ENCODE measurements at regions of chr3 and their contacts with region 1.

Region 1: GRCh38 chr3:81910244-81910852 is 148.9 kb upstream of the GBE1 start:
- DNase-seq: no peak
- H3K4me3 ChIP-seq: no peak overlapping the region
- CTCF ChIP-seq: peak; percentile 66

Region 2: GRCh38 chr3:81891055-81891895 is 19.1 kb before region 1 on chr3:
- CTCF ChIA-PET with region 1: interaction called, 21 read pairs
- POLR2A ChIA-PET with region 1: no interaction called
- DNase-seq: no peak
- H3K4me3 ChIP-seq: no peak overlapping the region
- CTCF ChIP-seq: no peak

Region 3: DNA sequence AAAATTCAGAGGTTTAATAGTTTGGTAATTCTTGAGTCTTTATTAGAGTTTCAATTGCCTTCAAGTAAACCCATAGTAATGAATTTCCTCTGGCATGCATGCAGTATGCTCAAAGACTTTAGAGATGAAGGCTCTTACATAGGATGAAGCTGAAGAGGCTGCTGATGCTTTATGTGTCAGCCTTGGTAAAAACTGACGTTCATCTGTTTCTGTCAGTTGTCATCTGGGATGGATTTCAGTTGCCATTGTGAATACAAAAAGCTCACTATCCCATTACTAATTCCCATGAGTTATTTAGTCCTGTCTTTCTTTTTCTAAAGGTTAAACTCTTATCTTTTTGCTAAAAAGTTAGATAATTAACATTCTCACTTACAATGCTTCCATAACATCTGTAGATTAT is 12.0 kb before region 1 on chr3:
- CTCF ChIA-PET with region 1: interaction called, 14 read pairs
- POLR2A ChIA-PET with region 1: no interaction called
- DNase-seq: no peak
- H3K4me3 ChIP-seq: no peak overlapping the region
- CTCF ChIP-seq: no peak

Region 4: DNA sequence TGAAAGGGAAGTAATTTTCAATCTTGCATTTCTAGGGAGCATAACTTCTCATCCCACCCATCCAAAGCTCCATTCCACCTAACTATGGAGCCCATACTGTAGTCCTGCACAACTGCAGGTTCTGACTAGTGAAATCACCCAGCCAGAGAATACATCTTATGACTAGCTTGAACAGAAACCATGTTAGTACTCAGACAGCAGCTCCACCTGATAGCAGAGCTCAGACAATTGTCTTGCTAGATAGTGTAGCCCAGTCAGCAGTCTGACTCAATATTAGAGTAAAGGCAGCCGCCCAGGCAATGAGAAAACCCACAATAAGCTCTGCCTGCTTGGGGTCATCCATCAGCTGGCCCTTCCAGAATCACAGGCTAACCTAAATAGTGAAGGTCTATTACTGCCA is 395.8 kb after region 1 on chr3:
- CTCF ChIA-PET with region 1: no interaction called
- POLR2A ChIA-PET with region 1: no interaction called
- DNase-seq: no peak
- H3K4me3 ChIP-seq: no peak overlapping the region
- CTCF ChIP-seq: no peak